Adrenal gland (tissue), 19 donors: ENCODE measurements at regions of chr3 and their contacts with region 1.

Region 1: GRCh38 chr3:172904711-172905373 is 154.3 kb downstream of the ECT2 start:
- DNase-seq: no peak
- H3K4me3 ChIP-seq: no peak overlapping the region
- H3K27ac ChIP-seq: no peak overlapping the region
- H3K4me1 ChIP-seq: no peaks in the 10 kb centered on the region
- H3K27me3 ChIP-seq: no peaks in the 10 kb centered on the region
- CTCF ChIP-seq: no peak
- POLR2A ChIP-seq: no peak

Region 2: GRCh38 chr3:174072675-174073074 is 1167.8 kb after region 1 on chr3:
- intact Hi-C with region 1: loop called in 1 of 2 experiments (anchors 5 kb)
- DNase-seq: no peak
- H3K4me3 ChIP-seq: no peak overlapping the region
- H3K27ac ChIP-seq: no peak overlapping the region
- H3K4me1 ChIP-seq: no peaks in the 10 kb centered on the region
- H3K27me3 ChIP-seq: no peaks in the 10 kb centered on the region
- CTCF ChIP-seq: no peak
- POLR2A ChIP-seq: no peak